CD8-positive, alpha-beta T cell (primary cell): ENCODE measurements at regions of chr1 and their contacts with region 1.

Region 1: GRCh38 chr1:116377541-116378529 is 4.8 kb downstream of the ATP1A1 start:
- DNase-seq: peak in 6 of 9 experiments; percentile 6 to 81 (median 52)
- ATAC-seq: peak; percentile 58
- H3K4me3 ChIP-seq: peak overlapping the region; percentile 24 to 39
- H3K4me3 Mint-ChIP-seq: peak overlapping the region; percentile 85
- H3K27ac ChIP-seq: peak overlapping the region; percentile 83 to 92
- H3K27ac Mint-ChIP-seq: peak overlapping the region; percentile 95
- H3K4me1 ChIP-seq: peaks cover 69% of the 10 kb centered on the region
- H3K4me1 Mint-ChIP-seq: peaks cover 85% of the 10 kb centered on the region
- H3K27me3 ChIP-seq: no peaks in the 10 kb centered on the region
- H3K27me3 Mint-ChIP-seq: no peaks in the 10 kb centered on the region
- CTCF ChIP-seq: no peak

Region 2: DNA sequence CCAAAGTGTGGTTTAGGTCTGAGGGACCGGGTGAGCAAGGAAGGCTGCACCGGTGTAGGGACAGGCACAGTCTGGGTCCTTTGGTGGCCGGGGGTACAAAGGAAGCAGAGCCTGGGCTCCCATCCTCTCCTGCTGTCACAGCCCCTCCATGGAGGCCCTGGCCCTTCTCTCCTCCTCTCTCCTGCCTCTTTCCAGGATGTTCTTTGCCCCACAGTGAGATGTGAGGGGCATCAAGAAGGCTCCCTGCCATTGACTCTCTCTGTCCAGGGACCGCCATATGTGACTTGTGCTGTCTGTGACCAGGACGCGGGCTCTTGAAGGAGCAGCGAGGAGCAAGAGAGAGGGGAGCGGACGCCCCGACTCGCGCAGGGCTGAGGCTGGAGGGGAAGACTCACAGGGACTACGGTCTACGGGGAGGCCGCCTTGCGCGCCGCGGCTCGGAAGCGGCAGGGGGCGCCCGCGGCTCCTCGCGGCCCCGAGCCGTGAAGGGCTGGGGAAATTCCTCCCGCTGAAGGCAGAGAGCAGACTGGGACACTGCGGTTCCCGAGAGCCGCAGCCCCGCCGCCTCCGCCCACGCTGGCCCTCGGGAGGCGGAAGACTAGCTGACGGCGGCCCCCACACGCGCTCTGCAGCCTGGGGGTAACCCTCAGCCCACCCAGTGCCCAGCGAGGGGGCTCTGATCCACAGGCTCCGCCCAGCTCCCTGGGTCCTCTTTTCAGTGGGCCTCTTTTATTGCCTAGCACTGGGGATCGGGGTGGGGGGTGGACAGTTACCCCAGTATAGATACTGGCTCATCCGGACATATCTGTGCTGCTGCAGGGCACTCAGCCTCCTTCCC is 225.9 kb before region 1 on chr1:
- CTCF ChIA-PET with region 1: interaction called, 4 read pairs
- POLR2A ChIA-PET with region 1: no interaction called
- intact Hi-C with region 1: loop called (anchors 5 kb)
- DNase-seq: peak; percentile 58 to 93 (median 76)
- ATAC-seq: peak; percentile 91
- H3K4me3 ChIP-seq: peak overlapping the region; percentile 35 to 52
- H3K4me3 Mint-ChIP-seq: peak overlapping the region; percentile 79
- H3K27ac ChIP-seq: peak overlapping the region; percentile 17 to 46
- H3K27ac Mint-ChIP-seq: peak overlapping the region; percentile 92
- H3K4me1 ChIP-seq: peaks cover 26% of the 10 kb centered on the region
- H3K4me1 Mint-ChIP-seq: peaks cover 30% of the 10 kb centered on the region
- H3K27me3 ChIP-seq: no peaks in the 10 kb centered on the region
- H3K27me3 Mint-ChIP-seq: no peaks in the 10 kb centered on the region
- CTCF ChIP-seq: peak; percentile 93

Region 3: DNA sequence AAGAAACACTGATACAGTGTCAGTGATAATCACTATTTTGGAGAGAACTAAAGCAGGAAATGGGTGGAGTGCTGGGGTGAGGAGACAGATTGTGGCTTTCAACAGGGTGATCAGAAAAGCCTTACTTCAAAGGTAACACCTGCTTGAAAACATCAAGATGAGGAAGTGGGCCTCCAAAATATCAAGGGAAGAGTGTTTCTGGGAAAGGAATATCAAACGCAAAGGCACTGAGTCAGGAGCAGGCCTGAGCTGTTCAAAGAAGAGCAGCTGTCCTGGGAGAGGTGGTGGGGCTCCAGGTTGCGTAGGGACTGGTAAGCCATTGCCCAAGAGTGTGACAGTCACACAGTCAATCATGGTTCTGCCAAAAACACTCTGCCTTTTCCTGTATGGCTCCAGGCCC is 51.9 kb before region 1 on chr1:
- CTCF ChIA-PET with region 1: no interaction called
- POLR2A ChIA-PET with region 1: interaction called, 14 read pairs
- intact Hi-C with region 1: loop called (anchors 1 to 5 kb)
- DNase-seq: peak in 8 of 9 experiments; percentile 8 to 78 (median 58)
- ATAC-seq: peak; percentile 85
- H3K4me3 ChIP-seq: peak overlapping the region; percentile 3 to 34
- H3K4me3 Mint-ChIP-seq: peak overlapping the region; percentile 70
- H3K27ac ChIP-seq: peak overlapping the region; percentile 55 to 78
- H3K27ac Mint-ChIP-seq: peak overlapping the region; percentile 95
- H3K4me1 ChIP-seq: peaks cover 84% of the 10 kb centered on the region
- H3K4me1 Mint-ChIP-seq: peaks cover 90% of the 10 kb centered on the region
- H3K27me3 ChIP-seq: no peaks in the 10 kb centered on the region
- H3K27me3 Mint-ChIP-seq: no peaks in the 10 kb centered on the region
- CTCF ChIP-seq: no peak

Region 4: DNA sequence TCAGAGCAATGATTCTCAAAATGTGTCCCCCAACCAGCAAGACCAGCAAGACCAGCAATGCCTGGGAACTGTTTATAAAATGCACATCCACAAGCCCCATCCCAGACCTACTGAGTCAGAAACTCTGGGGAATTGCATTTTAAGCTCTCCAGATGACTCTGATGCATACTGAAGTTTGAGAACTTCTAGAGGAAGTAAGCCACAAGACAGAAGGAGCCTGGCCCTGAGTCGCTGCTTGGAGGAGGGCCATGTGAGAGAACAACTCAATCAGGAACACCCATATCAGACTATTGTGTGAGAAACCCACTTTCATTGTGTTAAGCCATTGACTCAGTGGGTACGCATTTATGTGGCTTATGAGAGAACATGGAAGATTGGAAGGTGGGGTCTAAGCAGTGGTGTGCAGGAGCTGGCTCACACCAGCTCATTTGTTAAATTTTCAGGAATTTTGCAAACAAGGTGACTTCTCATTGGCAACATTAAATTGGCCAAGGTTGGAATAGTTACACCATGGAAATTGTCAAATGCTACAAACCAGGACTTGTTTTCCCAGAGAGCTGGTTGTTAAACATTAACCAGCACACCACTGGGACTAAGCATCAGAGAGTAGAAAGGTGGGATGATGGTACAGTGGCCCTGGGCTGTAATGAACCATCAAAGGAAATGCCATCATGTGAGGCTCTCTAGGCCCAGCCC is 34.1 kb after region 1 on chr1:
- CTCF ChIA-PET with region 1: interaction called, 4 read pairs
- POLR2A ChIA-PET with region 1: interaction called, 40 read pairs
- intact Hi-C with region 1: loop called in 1 of 2 experiments (anchors 2 kb)
- DNase-seq: no peak
- ATAC-seq: no peak
- H3K4me3 ChIP-seq: no peak overlapping the region
- H3K4me3 Mint-ChIP-seq: no peak overlapping the region
- H3K27ac ChIP-seq: no peak overlapping the region
- H3K27ac Mint-ChIP-seq: no peak overlapping the region
- H3K4me1 ChIP-seq: peaks cover 9% of the 10 kb centered on the region
- H3K4me1 Mint-ChIP-seq: peaks cover 19% of the 10 kb centered on the region
- H3K27me3 ChIP-seq: no peaks in the 10 kb centered on the region
- H3K27me3 Mint-ChIP-seq: no peaks in the 10 kb centered on the region
- CTCF ChIP-seq: no peak

Region 5: DNA sequence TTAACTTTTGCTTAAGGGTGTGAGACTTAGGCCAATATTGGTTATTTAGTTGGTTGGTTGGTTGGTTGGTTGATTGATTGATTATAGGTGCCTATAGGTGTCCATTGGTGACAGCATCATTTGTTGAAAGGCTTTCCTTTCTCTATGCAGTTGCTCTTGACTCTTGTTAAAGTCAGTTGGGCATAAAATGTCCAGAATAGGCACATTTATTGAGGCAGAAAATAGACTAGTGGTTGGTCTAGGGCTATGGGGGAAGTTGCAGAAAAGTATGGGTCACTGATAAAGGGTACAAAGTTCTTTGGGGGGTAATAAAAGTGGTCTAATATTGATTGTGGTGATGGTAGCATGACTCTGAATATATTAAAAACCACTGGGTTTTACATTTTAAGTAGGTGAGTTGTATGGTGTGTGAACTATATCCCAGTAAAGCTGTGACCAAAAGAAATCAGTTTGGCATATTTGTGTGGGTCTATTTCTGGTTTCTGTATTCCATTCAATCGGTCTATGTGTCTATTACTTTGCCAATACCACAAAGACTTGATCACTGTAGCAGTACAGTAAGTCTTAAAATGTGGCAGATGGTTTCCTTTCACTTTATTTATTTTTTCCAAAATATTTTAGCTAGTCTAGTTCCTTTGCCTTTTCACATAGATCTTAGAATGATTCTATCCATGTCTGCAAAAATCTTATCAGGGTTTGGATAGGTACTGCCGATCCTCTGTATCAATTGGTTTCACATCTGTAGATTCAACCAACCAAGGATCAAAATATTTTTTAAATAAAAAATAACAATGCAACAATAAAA is 58.2 kb after region 1 on chr1:
- CTCF ChIA-PET with region 1: no interaction called
- POLR2A ChIA-PET with region 1: interaction called, 3 read pairs
- intact Hi-C with region 1: loop called in 1 of 2 experiments (anchors 5 kb)
- DNase-seq: no peak
- ATAC-seq: peak; percentile 36
- H3K4me3 ChIP-seq: no peak overlapping the region
- H3K4me3 Mint-ChIP-seq: no peak overlapping the region
- H3K27ac ChIP-seq: no peak overlapping the region
- H3K27ac Mint-ChIP-seq: no peak overlapping the region
- H3K4me1 ChIP-seq: no peaks in the 10 kb centered on the region
- H3K4me1 Mint-ChIP-seq: no peaks in the 10 kb centered on the region
- H3K27me3 ChIP-seq: no peaks in the 10 kb centered on the region
- H3K27me3 Mint-ChIP-seq: no peaks in the 10 kb centered on the region
- CTCF ChIP-seq: no peak